ENCODE measurements at regions of chr12 and their contacts with region 1.

Region 1: GRCh38 chr12:3135522-3136461 is 58.6 kb downstream of the TSPAN9 start:
- DNase-seq: no peak
- H3K4me3 ChIP-seq: no peak overlapping the region
- H3K27me3 ChIP-seq: no peaks in the 10 kb centered on the region
- CTCF ChIP-seq: peak; percentile 74

Region 2: GRCh38 chr12:3073438-3074250 is 62.1 kb before region 1 on chr12:
- CTCF ChIA-PET with region 1: interaction called, 52 read pairs
- POLR2A ChIA-PET with region 1: no interaction called
- DNase-seq: peak; percentile 36
- H3K4me3 ChIP-seq: no peak overlapping the region
- H3K27me3 ChIP-seq: no peaks in the 10 kb centered on the region; the same call in 1 of the 2 replicates
- CTCF ChIP-seq: peak; percentile 99

Region 3: GRCh38 chr12:3122835-3123678 is 12.7 kb before region 1 on chr12:
- CTCF ChIA-PET with region 1: interaction called, 12 read pairs
- POLR2A ChIA-PET with region 1: no interaction called
- DNase-seq: no peak
- H3K4me3 ChIP-seq: no peak overlapping the region
- H3K27me3 ChIP-seq: no peaks in the 10 kb centered on the region
- CTCF ChIP-seq: peak; percentile 37; the same call in 1 of the 2 replicates

Region 4: GRCh38 chr12:3148366-3149000 is 12.7 kb after region 1 on chr12:
- CTCF ChIA-PET with region 1: interaction called, 12 read pairs
- POLR2A ChIA-PET with region 1: no interaction called
- DNase-seq: no peak
- H3K4me3 ChIP-seq: no peak overlapping the region
- H3K27me3 ChIP-seq: no peaks in the 10 kb centered on the region
- CTCF ChIP-seq: no peak

Region 5: DNA sequence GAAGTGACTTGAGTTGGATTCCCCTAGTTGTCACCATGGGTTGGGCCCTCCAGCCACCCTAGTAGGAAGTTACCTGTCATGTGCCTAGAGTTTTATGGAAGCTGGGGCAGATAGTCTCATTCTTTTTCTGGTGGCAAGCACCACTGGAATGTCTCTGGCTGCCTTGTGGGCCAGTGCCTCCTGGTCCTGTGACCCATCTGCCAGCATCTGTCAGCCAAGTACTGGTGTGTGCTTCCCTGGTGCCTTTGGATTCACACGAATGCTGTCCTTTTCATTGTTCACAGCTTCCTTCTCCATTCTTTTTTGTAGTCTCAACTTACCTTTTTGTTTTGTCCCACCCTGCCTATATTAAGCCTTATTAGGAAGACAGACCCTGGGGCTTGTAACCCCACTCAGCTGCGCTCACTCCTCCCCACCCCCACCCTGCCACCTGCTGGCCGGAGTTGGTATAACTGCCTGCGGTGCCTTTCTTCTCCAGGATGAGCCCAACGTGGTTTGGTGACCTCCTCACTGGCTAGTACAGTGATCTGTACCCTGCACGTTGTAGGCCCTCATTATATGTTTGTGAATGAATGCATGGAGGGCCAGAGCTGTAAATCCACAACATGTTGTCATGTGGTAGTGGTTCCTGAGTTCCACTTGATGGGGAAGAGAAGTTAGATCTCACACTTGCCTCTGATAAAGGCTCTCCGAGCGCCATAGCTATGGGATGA is 67.1 kb after region 1 on chr12:
- CTCF ChIA-PET with region 1: interaction called, 52 read pairs
- POLR2A ChIA-PET with region 1: no interaction called
- DNase-seq: no peak
- H3K4me3 ChIP-seq: no peak overlapping the region
- H3K27me3 ChIP-seq: peaks cover 2% of the 10 kb centered on the region; the same call in 1 of the 2 replicates
- CTCF ChIP-seq: peak; percentile 98

Region 6: GRCh38 chr12:3256103-3256631 is 120.4 kb after region 1 on chr12:
- CTCF ChIA-PET with region 1: interaction called, 10 read pairs
- POLR2A ChIA-PET with region 1: no interaction called
- DNase-seq: no peak
- H3K4me3 ChIP-seq: no peak overlapping the region
- H3K27me3 ChIP-seq: no peaks in the 10 kb centered on the region
- CTCF ChIP-seq: no peak

Region 7: GRCh38 chr12:3275171-3276041 is 139.6 kb after region 1 on chr12:
- CTCF ChIA-PET with region 1: interaction called, 223 read pairs
- POLR2A ChIA-PET with region 1: no interaction called
- DNase-seq: no peak
- H3K4me3 ChIP-seq: no peak overlapping the region
- H3K27me3 ChIP-seq: no peaks in the 10 kb centered on the region
- CTCF ChIP-seq: peak; percentile 98